Mammary epithelial cell (primary cell): ENCODE measurements at regions of chr2 and their contacts with region 1.

Region 1: GRCh38 chr2:188291617-188292347 is at the start of gene GULP1:
- DNase-seq: peak; percentile 72
- H3K4me3 ChIP-seq: peak within 1 kb of the TSS; percentile 75 to 91 (median 79)
- H3K27ac ChIP-seq: peak within 1 kb of the TSS; percentile 72
- H3K4me1 ChIP-seq: peaks cover 24% of the 10 kb centered on the region
- H3K27me3 ChIP-seq: no peaks in the 10 kb centered on the region
- CTCF ChIP-seq: peak; percentile 48 to 79
- total RNA-seq, gene GULP1: 17.3 to 49.7 TPM

Region 2: GRCh38 chr2:187964746-187965145 is 327.0 kb before region 1 on chr2:
- CTCF ChIA-PET with region 1: no interaction called
- dilution Hi-C with region 1: no loop called
- in situ Hi-C with region 1: no loop called
- intact Hi-C with region 1: loop called (anchors 5 kb)
- DNase-seq: peak; percentile 45
- H3K4me3 ChIP-seq: no peak overlapping the region
- H3K27ac ChIP-seq: no peak overlapping the region
- H3K4me1 ChIP-seq: no peaks in the 10 kb centered on the region
- H3K27me3 ChIP-seq: no peaks in the 10 kb centered on the region
- CTCF ChIP-seq: no peak

Region 3: GRCh38 chr2:188369365-188369764 is 77.6 kb after region 1 on chr2:
- CTCF ChIA-PET with region 1: no interaction called
- dilution Hi-C with region 1: no loop called
- in situ Hi-C with region 1: loop called in 1 of 2 experiments (anchors 5 kb)
- intact Hi-C with region 1: loop called (anchors 1 kb)
- DNase-seq: peak; percentile 56
- H3K4me3 ChIP-seq: no peak overlapping the region
- H3K27ac ChIP-seq: no peak overlapping the region
- H3K4me1 ChIP-seq: no peaks in the 10 kb centered on the region
- H3K27me3 ChIP-seq: no peaks in the 10 kb centered on the region
- CTCF ChIP-seq: peak; percentile 64 to 85

Region 4: GRCh38 chr2:188506843-188507242 is 215.1 kb after region 1 on chr2:
- CTCF ChIA-PET with region 1: no interaction called
- dilution Hi-C with region 1: no loop called
- in situ Hi-C with region 1: loop called in 1 of 2 experiments (anchors 10 kb)
- intact Hi-C with region 1: loop called (anchors 1 kb)
- DNase-seq: no peak
- H3K4me3 ChIP-seq: no peak overlapping the region
- H3K27ac ChIP-seq: no peak overlapping the region
- H3K4me1 ChIP-seq: no peaks in the 10 kb centered on the region
- H3K27me3 ChIP-seq: no peaks in the 10 kb centered on the region
- CTCF ChIP-seq: no peak